ENCODE measurements at regions of chr10 and their contacts with region 1.

Region 1: DNA sequence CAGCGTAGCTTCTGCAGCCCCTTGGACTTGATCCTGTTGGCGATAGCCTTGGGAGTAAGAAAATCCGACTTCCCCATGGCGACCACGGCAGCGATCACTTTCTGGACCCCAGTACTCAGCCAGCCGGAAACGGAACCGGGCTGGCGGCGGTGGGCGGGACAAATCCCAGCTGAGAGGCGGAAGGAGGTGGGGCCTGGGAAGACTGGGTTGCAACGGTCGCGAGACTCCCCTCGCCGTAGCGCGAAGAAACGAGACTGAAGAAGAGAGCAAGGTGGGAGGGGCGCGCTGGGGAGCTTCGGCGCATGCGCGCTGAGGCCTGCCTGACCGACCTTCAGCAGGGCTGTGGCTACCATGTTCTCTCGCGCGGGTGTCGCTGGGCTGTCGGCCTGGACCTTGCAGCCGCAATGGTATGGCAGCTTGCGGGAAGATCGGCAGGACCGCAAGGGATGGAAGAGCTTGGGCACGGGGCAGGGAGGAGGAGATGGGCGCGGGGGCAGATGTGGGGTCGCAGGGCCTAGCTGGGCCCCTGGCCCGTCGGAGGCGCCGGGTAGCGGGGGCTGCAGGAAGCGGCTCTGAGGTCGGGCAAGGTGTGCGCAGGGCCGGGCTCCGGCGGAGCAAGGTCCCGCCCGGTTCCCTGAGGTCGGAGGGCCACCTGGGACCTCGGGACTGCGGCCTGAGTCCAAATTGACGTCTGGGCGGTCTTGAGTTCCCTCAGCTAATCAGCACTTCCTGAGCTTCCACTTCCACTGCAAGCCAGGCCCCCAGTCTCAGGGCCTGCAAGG is at the starts of genes ATP5F1C and KIN:
- DNase-seq: peak; percentile 98
- H3K4me3 ChIP-seq: peak within 1 kb of the TSS; percentile 71 to 95 (median 81)
- H3K27ac ChIP-seq: peak within 1 kb of the TSS; percentile 53
- H3K4me1 ChIP-seq: peaks cover 18% of the 10 kb centered on the region
- H3K27me3 ChIP-seq: no peaks in the 10 kb centered on the region
- CTCF ChIP-seq: no peak
- POLR2A ChIP-seq: peak; percentile 88
- total RNA-seq, gene ATP5F1C: 275 and 290 TPM in 2 replicates
- total RNA-seq, gene KIN: 13.6 and 14.4 TPM in 2 replicates

Region 2: DNA sequence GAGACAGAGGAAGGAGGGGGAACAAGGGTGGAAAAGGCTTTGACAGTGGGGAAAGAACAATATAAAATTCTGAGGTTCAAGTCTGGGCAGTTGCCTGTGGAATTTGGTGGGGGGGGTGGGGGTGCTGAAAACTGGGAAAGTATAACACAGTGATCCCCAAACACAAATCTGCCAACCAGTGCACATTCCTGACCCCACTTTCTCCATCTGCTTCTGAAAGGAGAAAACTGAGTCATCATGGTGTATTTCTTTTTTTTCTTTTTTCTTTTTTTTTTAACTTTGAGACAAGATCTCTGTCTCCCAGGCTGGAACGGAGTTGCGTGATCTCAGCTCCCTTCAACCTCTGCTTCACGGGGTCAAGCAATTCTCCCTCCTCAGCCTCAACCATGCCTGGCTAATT is 116.9 kb before region 1 on chr10:
- CTCF ChIA-PET with region 1: no interaction called
- POLR2A ChIA-PET with region 1: no interaction called
- dilution Hi-C with region 1: no loop called
- intact Hi-C with region 1: no loop called
- DNase-seq: no peak
- H3K4me3 ChIP-seq: no peak overlapping the region
- H3K27ac ChIP-seq: no peak overlapping the region
- H3K4me1 ChIP-seq: no peaks in the 10 kb centered on the region
- H3K27me3 ChIP-seq: peaks cover 9 to 11% of the 10 kb centered on the region in 2 experiments
- CTCF ChIP-seq: no peak
- POLR2A ChIP-seq: no peak

Region 3: DNA sequence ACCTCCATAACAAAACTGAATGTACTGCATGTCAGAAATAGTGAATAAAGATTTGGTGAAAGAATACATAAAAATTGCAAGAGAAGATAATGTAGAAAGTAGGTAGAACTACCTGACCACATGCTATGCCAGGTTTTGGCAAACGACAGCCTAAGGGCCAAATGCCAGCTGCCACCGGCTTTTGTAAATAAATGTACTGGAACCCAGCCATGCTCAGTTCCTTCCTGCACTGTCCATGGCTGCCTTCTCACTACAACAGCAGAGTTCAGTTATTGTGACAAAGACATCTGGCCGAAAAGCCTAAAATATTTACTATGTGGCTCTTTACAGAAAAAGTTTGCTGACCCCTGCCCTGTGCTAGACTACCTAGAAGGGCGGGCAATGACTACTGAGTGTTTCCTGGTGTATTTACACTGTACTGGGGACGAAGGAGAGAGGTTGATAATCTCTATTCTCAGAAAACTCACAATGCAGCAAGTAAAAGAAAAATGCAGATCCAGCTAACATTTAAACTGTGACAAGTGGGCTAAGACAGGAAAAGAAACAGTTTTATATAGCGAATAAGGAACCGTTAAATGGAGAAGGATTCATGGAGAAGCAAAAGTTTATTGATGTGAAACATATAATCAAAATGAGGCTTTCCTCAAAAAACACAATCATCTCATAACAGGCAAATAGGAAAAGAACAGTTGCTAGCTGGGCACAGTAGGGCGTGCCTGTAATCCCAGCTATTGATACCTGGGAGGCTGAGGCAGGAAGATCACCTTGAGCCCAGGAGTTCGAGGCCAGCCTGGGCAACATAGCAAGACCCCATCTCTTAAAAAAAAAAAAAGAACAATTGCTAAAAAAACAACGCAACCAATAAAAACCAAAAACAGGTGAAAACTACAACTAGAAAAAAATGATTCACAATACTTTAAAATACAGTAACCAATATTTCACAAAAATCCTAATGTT is 13.9 kb before region 1 on chr10:
- CTCF ChIA-PET with region 1: interaction called, 4 read pairs
- POLR2A ChIA-PET with region 1: interaction called, 4 read pairs
- dilution Hi-C with region 1: no loop called
- intact Hi-C with region 1: loop called (anchors 1 kb)
- DNase-seq: peak; percentile 62
- H3K4me3 ChIP-seq: no peak overlapping the region
- H3K27ac ChIP-seq: peak overlapping the region; percentile 11
- H3K4me1 ChIP-seq: peaks cover 12% of the 10 kb centered on the region
- H3K27me3 ChIP-seq: no peaks in the 10 kb centered on the region
- CTCF ChIP-seq: no peak
- POLR2A ChIP-seq: no peak

Region 4: GRCh38 chr10:7818295-7819122 is 30.5 kb after region 1 on chr10 and contains the start of gene TAF3:
- CTCF ChIA-PET with region 1: interaction called, 19 read pairs
- POLR2A ChIA-PET with region 1: interaction called, 9 read pairs
- dilution Hi-C with region 1: no loop called
- intact Hi-C with region 1: loop called (anchors 1 kb)
- DNase-seq: peak; percentile 85
- H3K4me3 ChIP-seq: peak within 1 kb of the TSS; percentile 70 to 99 (median 83)
- H3K27ac ChIP-seq: peak within 1 kb of the TSS; percentile 6
- H3K4me1 ChIP-seq: peaks cover 4% of the 10 kb centered on the region
- H3K27me3 ChIP-seq: peaks cover 5 to 7% of the 10 kb centered on the region in 2 experiments
- CTCF ChIP-seq: no peak
- POLR2A ChIP-seq: peak; percentile 77
- total RNA-seq, gene TAF3: 10.1 and 10.5 TPM in 2 replicates